Activated CD4-positive, alpha-beta memory T cell treated with anti-CD3 and anti-CD28 coated beads for 36 hours (primary cell): ENCODE measurements at regions of chr17 and their contacts with region 1.

Region 1: GRCh38 chr17:39863918-39864746 is at the start of gene IKZF3:
- DNase-seq: peak; percentile 93
- H3K4me3 Mint-ChIP-seq: peak within 1 kb of the TSS; percentile 83
- H3K27ac Mint-ChIP-seq: peak within 1 kb of the TSS; percentile 84
- H3K4me1 Mint-ChIP-seq: peaks cover 65% of the 10 kb centered on the region
- H3K27me3 Mint-ChIP-seq: no peaks in the 10 kb centered on the region
- total RNA-seq, gene IKZF3: 51.2 to 52.0 TPM

Region 2: DNA sequence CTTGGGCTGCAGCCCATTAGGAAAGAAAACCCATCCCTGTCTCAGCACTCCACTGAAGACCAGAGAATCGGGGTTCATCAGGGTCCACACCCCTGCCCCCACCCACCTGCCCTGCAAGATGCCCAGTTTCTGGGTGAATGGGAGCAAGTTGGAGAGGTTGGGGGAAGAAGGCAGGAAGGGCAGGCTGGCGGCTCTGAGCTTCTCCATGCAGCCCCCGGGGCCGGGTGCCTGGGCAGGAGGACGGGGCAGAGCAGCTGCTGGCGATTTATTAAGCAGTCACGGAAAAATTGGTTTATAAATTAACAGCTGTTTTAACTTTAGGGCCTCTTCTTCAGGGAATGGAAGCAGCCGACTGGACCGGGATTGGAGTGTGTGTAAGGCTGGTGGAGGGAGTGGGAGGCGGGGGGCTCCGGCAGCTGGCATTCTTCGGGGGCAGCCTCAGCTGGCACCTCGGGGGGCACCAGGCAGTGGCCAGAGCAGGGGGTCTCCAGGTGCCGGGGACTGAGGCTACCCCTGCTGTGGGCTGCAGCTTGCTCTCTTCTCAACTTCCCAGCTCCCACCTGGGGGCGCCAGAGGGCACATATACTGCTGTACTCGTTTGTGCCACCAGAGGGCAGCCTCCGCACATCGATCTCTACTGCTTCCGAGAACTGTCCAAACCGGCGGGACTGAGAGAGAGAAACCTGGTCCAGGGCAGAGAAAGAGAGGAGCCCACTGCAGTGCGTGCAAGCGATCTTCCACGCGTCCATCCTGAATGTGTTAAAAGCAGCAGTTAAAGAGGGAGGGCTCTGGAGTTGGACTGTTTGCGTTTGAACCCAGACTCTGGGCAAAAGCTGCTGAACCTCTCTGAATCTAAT is 242.4 kb before region 1 on chr17:
- CTCF ChIA-PET with region 1: interaction called, 11 read pairs
- POLR2A ChIA-PET with region 1: no interaction called
- intact Hi-C with region 1: loop called (anchors 1 kb)
- DNase-seq: peak; percentile 92
- H3K4me3 Mint-ChIP-seq: peak overlapping the region; percentile 76
- H3K27ac Mint-ChIP-seq: peak overlapping the region; percentile 97
- H3K4me1 Mint-ChIP-seq: peaks cover 23% of the 10 kb centered on the region
- H3K27me3 Mint-ChIP-seq: peaks cover 20% of the 10 kb centered on the region

Region 3: DNA sequence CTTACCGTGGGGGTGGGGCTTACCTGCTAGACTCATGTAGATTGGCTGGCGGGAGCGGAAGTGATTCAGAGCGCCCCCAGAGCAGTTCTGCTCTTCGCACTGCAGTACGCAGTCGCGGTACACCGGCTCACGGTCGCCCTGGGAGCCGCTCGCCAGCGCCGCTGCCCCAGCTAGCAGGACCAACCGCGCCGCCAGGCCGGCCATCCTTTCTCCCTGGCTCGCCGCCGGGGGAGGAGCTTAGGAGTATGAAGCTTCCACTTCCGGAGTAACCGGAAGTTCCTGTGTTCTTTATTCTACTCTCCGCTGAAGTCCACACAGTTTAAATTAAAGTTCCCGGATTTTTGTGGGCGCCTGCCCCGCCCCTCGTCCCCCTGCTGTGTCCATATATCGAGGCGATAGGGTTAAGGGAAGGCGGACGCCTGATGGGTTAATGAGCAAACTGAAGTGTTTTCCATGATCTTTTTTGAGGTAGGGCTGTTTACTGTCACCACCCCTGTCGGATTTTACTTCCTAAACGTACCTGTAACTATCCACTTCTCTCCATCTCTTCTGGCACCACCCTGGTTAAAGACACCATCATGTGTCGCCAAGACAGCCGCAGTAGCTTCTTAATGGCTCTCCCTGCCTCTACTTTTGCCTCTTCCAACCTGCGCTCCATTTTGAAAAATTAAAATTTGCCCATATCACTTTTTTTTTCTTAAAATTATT is 176.2 kb before region 1 on chr17 and contains the start of gene PGAP3:
- CTCF ChIA-PET with region 1: no interaction called
- POLR2A ChIA-PET with region 1: no interaction called
- intact Hi-C with region 1: loop called (anchors 5 kb)
- DNase-seq: peak; percentile 91
- H3K4me3 Mint-ChIP-seq: peak within 1 kb of the TSS; percentile 92
- H3K27ac Mint-ChIP-seq: peak within 1 kb of the TSS; percentile 84
- H3K4me1 Mint-ChIP-seq: peaks cover 18% of the 10 kb centered on the region
- H3K27me3 Mint-ChIP-seq: no peaks in the 10 kb centered on the region
- total RNA-seq, gene PGAP3: 8.3 to 8.6 TPM

Region 4: DNA sequence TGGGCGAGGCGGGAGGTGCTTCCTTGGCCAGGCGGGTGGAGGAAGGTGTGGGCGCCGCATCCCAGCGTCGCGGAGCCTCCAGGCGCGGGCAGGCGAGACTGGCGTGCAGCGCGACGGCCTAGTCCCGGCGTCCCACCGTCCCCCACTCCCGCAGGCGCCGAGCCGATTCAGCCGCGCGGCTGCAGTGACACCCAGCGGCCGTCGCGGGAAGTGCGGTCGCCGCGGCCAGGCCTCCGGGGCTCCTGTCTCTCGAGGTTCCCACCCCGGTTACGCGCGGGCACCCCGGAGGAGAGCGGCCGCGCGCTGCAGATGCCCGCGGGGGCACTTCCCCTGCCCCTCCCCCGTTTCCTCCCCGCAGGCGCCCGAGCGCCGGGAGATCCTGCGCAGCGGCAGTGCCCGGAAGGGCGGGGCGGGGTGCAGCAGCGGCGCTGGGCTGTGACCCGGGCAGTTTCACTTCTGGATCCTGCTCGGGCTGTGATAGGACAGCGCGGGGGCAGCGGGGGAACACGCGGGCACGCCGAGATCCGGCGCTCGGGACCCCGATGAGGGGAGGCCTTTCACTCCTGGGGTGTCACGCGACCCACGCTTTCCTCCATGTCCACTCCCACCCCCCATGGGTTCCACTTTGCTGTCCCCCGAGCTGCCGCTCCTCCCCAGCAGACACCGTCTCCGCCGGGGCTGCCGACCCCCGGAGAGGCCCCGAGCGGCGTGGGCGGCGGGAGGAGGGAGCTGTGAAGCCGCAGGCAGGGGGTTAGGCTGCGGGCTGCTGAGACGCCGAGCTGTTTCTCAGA is 109.8 kb before region 1 on chr17:
- CTCF ChIA-PET with region 1: interaction called, 9 read pairs
- POLR2A ChIA-PET with region 1: interaction called, 15 read pairs
- intact Hi-C with region 1: loop called (anchors 1 kb)
- DNase-seq: peak; percentile 98
- H3K4me3 Mint-ChIP-seq: peak overlapping the region; percentile 78
- H3K27ac Mint-ChIP-seq: peak overlapping the region; percentile 91
- H3K4me1 Mint-ChIP-seq: peaks cover 67% of the 10 kb centered on the region
- H3K27me3 Mint-ChIP-seq: no peaks in the 10 kb centered on the region

Region 5: DNA sequence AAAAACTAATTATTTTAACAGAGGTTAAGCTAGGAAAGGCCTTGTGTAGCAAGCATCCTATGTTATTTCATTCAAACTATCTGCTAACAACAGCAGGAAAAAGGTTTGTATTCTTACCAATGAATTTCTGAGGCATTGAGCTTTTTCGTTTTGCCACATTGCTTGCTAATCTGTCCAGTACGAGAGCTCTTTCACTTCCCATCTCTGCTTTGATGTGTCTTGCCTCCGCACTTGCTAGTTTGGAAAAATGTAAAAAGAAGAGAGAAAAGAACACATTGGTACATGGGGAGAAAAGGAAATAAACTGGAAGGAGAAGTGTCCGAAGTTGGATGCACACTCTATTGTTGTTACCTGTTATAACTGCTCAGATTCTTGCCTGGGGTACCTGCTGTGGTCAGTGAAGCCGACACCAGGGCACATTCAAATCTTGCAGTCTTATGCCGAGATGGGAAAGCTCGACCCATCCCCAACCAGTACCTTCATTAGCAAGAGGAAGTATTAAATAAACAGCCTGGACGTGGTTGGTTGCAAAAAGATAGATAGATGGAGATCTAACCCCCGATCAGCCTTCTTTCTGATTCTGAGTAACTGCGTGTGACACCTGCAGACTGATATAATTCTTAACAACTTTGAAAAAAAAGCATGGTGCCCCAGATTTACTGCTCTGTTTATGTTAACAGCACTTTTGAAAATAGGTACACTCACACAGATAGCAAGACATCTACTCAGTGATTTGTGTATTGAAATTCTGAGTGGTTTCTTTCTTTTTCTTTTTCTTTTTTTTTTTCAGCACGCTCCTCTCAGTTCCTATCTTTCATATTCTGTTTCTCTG is 86.4 kb before region 1 on chr17:
- CTCF ChIA-PET with region 1: interaction called, 7 read pairs
- POLR2A ChIA-PET with region 1: interaction called, 13 read pairs
- intact Hi-C with region 1: loop called (anchors 1 kb)
- DNase-seq: no peak
- H3K4me3 Mint-ChIP-seq: peak overlapping the region; percentile 80
- H3K27ac Mint-ChIP-seq: peak overlapping the region; percentile 88
- H3K4me1 Mint-ChIP-seq: peaks cover 84% of the 10 kb centered on the region
- H3K27me3 Mint-ChIP-seq: no peaks in the 10 kb centered on the region

Region 6: DNA sequence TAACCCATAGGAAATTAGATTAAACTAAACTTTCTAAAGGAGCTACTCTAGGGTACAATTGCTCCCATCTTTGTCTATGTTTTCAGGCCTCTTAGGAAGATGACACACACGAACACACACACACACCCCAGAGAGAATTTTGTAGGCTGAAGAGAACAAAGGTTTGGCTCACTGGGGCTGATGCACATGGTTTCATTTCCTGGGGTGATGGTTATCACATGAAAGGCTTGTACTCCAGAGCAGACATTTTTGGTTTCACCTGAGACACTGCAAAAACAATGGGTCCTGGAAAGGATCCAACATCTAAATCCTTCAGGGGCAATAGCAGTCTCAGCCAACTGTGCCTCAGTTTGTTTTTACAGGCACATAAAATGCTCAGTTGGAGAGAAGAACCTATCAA is 63.6 kb before region 1 on chr17:
- CTCF ChIA-PET with region 1: no interaction called
- POLR2A ChIA-PET with region 1: no interaction called
- intact Hi-C with region 1: no loop called
- DNase-seq: peak; percentile 72
- H3K4me3 Mint-ChIP-seq: peak overlapping the region; percentile 30
- H3K27ac Mint-ChIP-seq: peak overlapping the region; percentile 85
- H3K4me1 Mint-ChIP-seq: peaks cover 54% of the 10 kb centered on the region
- H3K27me3 Mint-ChIP-seq: no peaks in the 10 kb centered on the region

Region 7: GRCh38 chr17:39822051-39822451 is 42.1 kb before region 1 on chr17:
- CTCF ChIA-PET with region 1: interaction called, 7 read pairs
- POLR2A ChIA-PET with region 1: no interaction called
- intact Hi-C with region 1: loop called (anchors 1 kb)
- DNase-seq: peak; percentile 50
- H3K4me3 Mint-ChIP-seq: no peak overlapping the region
- H3K27ac Mint-ChIP-seq: peak overlapping the region; percentile 38
- H3K4me1 Mint-ChIP-seq: peaks cover 60% of the 10 kb centered on the region
- H3K27me3 Mint-ChIP-seq: no peaks in the 10 kb centered on the region

Region 8: GRCh38 chr17:39952680-39953470 is 88.7 kb after region 1 on chr17:
- CTCF ChIA-PET with region 1: interaction called, 5 read pairs
- POLR2A ChIA-PET with region 1: no interaction called
- intact Hi-C with region 1: loop called (anchors 2 kb)
- DNase-seq: peak; percentile 98
- H3K4me3 Mint-ChIP-seq: peak overlapping the region; percentile 76
- H3K27ac Mint-ChIP-seq: peak overlapping the region; percentile 73
- H3K4me1 Mint-ChIP-seq: peaks cover 6% of the 10 kb centered on the region
- H3K27me3 Mint-ChIP-seq: no peaks in the 10 kb centered on the region